Activated CD8-positive, alpha-beta T cell treated with anti-CD3 and anti-CD28 coated beads for 36 hours (primary cell): ENCODE measurements at regions of chr11 and their contacts with region 1.

Region 1: GRCh38 chr11:118145285-118146227 is 7.1 kb downstream of the SCN4B start:
- DNase-seq: peak; percentile 96
- ATAC-seq: peak; percentile 95
- H3K4me3 Mint-ChIP-seq: peak overlapping the region; percentile 76
- H3K27ac Mint-ChIP-seq: no peak overlapping the region
- H3K4me1 Mint-ChIP-seq: peaks cover 3% of the 10 kb centered on the region
- H3K27me3 Mint-ChIP-seq: peaks cover 42% of the 10 kb centered on the region
- CTCF ChIP-seq: peak; percentile 84

Region 2: DNA sequence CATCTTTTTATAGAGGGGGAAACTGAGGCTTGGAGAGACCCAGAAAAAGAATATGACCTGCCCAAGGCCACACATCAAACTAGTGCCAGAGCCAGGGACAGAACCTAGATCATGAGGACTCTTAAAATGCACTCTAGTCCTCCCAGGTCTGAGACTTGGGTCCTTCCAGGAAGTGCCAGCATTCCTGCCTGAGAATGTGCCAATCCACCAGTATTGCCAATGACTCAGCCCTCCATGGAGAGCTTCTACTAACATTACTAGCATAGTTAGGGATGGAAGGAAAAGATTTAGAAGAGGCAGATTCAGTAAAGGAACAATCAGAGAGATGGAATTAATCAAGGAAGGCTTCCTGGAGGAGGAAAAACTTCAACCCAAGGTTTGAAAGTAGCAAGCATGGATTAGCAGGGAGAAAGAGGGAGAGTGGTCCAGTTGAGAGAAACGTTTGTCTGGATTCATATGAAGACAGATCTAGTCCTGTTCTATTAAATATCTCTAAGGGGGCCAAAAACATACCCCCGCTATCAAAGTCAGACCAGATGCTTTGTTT is 38.7 kb before region 1 on chr11:
- CTCF ChIA-PET with region 1: no interaction called
- POLR2A ChIA-PET with region 1: no interaction called
- intact Hi-C with region 1: no loop called
- DNase-seq: no peak
- ATAC-seq: no peak
- H3K4me3 Mint-ChIP-seq: no peak overlapping the region
- H3K27ac Mint-ChIP-seq: no peak overlapping the region
- H3K4me1 Mint-ChIP-seq: peaks cover 2% of the 10 kb centered on the region
- H3K27me3 Mint-ChIP-seq: peaks cover 1% of the 10 kb centered on the region
- CTCF ChIP-seq: no peak

Region 3: DNA sequence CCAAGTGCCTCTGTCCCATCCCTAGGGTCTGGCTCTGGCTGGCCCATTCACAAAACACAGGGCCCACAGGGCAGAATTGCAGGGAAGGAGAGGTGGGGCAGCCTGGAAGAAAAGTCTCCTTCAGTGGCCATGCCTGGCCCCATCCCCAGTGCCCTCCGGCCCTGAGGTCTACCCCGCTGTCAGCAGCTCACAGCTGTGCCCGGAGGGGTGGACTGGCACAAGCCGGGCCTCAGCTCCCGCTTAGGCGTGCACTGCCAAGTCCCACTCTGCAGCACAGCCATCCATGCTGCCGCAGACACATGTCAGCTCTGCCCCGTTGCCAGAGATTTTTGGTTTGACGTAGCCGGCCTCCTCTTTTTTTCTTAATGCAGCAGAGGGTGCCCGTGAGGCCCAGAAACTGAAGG is 34.7 kb after region 1 on chr11:
- CTCF ChIA-PET with region 1: interaction called, 10 read pairs
- POLR2A ChIA-PET with region 1: no interaction called
- intact Hi-C with region 1: no loop called
- DNase-seq: peak; percentile 35
- ATAC-seq: peak; percentile 60
- H3K4me3 Mint-ChIP-seq: no peak overlapping the region
- H3K27ac Mint-ChIP-seq: no peak overlapping the region
- H3K4me1 Mint-ChIP-seq: peaks cover 5% of the 10 kb centered on the region
- H3K27me3 Mint-ChIP-seq: peaks cover 11% of the 10 kb centered on the region
- CTCF ChIP-seq: no peak

Region 4: DNA sequence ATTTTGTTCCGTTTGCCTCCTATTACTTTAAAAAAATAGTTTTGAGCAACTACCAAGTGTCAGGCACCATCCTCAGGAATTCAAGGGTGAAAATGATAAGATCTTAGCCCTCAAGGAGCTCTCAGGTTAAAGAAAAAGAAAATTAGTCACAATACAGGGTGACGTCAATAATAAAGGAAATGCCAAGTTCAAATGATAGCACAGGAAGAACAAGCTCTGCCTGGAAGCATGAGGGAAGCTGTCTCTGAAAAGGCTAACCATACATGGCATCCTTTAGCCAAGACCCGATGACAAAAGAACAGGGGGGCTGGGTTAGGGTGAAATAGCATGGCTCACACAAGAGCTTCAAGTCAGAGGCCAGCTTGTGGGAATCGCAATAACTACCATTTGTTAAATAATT is 129.6 kb after region 1 on chr11:
- CTCF ChIA-PET with region 1: no interaction called
- POLR2A ChIA-PET with region 1: no interaction called
- intact Hi-C with region 1: no loop called
- DNase-seq: no peak
- ATAC-seq: peak; percentile 63
- H3K4me3 Mint-ChIP-seq: no peak overlapping the region
- H3K27ac Mint-ChIP-seq: peak overlapping the region; percentile 43
- H3K4me1 Mint-ChIP-seq: peaks cover 41% of the 10 kb centered on the region
- H3K27me3 Mint-ChIP-seq: no peaks in the 10 kb centered on the region
- CTCF ChIP-seq: no peak

Region 5: GRCh38 chr11:118290923-118291322 is 145.4 kb after region 1 on chr11:
- CTCF ChIA-PET with region 1: interaction called, 7 read pairs
- POLR2A ChIA-PET with region 1: no interaction called
- intact Hi-C with region 1: loop called (anchors 5 kb)
- DNase-seq: peak; percentile 74
- ATAC-seq: peak; percentile 71
- H3K4me3 Mint-ChIP-seq: no peak overlapping the region
- H3K27ac Mint-ChIP-seq: no peak overlapping the region
- H3K4me1 Mint-ChIP-seq: peaks cover 32% of the 10 kb centered on the region
- H3K27me3 Mint-ChIP-seq: no peaks in the 10 kb centered on the region
- CTCF ChIP-seq: peak; percentile 48